IMR-90 (cell line): ENCODE measurements at regions of chr5 and their contacts with region 1.

Region 1: GRCh38 chr5:107456281-107456715 is 214.4 kb downstream of the EFNA5 start:
- DNase-seq: peak; percentile 31
- ATAC-seq: peak; percentile 75
- H3K4me3 ChIP-seq: no peak overlapping the region
- H3K27ac ChIP-seq: peak overlapping the region; percentile 34; the same call in 1 of the 2 replicates
- H3K4me1 ChIP-seq: peaks cover 8% of the 10 kb centered on the region
- H3K27me3 ChIP-seq: no peaks in the 10 kb centered on the region
- CTCF ChIP-seq: no peak
- POLR2A ChIP-seq: no peak
- RAD21 ChIP-seq: no peak

Region 2: DNA sequence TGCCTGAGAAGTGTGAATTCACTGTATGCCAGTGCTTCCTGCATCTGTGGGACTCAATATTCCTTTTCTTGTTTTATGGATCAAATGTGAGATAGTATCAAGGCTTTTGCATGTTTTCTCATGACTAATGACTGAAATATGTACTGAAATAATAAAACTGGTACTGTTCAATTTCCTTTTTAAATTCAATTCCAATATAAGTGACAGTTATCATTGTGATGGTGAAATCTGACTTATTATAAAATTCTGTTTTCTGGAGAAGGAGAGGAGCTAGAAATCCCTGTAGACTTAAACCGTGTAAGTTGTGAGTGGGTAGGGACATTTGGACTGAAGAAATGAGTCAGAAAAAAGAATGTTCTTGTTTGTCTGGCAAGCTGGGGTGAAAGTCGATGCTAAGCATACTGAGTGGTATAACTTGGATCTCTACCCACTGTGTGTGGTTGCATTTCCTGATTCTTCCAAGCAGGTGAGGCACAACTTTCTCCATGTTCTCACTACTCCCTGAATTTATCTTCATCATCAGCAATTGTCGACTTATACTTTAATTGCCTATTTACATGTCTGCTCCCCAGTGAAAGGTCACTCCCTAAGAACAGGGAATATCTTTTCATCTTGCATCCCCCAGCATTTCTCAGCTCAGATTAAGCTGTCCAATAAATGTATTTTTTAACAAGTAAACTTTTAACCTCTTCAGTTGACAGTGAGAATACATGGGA is 30.6 kb before region 1 on chr5:
- CTCF ChIA-PET with region 1: no interaction called
- POLR2A ChIA-PET with region 1: interaction called, 11 read pairs
- dilution Hi-C with region 1: no loop called
- in situ Hi-C with region 1: no loop called
- intact Hi-C with region 1: no loop called
- DNase-seq: peak; percentile 80
- ATAC-seq: peak; percentile 83
- H3K4me3 ChIP-seq: no peak overlapping the region
- H3K27ac ChIP-seq: no peak overlapping the region
- H3K4me1 ChIP-seq: peaks cover 13% of the 10 kb centered on the region
- H3K27me3 ChIP-seq: no peaks in the 10 kb centered on the region
- CTCF ChIP-seq: no peak
- POLR2A ChIP-seq: no peak
- RAD21 ChIP-seq: no peak

Region 3: DNA sequence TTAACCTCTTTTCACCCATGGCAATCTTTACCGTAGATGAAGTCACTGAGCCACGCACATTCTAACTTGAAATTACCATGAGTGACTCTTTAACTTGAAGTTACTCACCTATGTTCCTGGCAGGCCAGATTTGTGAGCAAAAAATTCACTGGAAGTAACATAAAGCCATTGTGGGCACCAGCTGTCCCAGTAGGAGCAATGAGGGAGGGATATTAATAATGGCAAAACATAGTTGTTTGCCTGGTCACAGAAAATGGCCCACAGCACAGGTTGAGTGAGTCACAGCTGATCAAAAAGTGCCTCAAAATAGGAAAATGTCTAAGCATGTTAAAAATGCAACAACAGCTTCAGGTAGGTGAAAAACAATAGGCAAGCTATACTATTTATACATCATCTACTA is 67.8 kb after region 1 on chr5:
- CTCF ChIA-PET with region 1: no interaction called
- POLR2A ChIA-PET with region 1: no interaction called
- dilution Hi-C with region 1: no loop called
- in situ Hi-C with region 1: no loop called
- intact Hi-C with region 1: loop called (anchors 2 kb)
- DNase-seq: no peak
- ATAC-seq: no peak
- H3K4me3 ChIP-seq: no peak overlapping the region
- H3K27ac ChIP-seq: no peak overlapping the region
- H3K4me1 ChIP-seq: peaks cover 3% of the 10 kb centered on the region
- H3K27me3 ChIP-seq: no peaks in the 10 kb centered on the region
- CTCF ChIP-seq: no peak
- POLR2A ChIP-seq: no peak
- RAD21 ChIP-seq: no peak